ENCODE measurements at regions of chr2 and their contacts with region 1.

Region 1: GRCh38 chr2:172972005-172972619 is 103.5 kb upstream of the MAP3K20 start:
- H3K4me3 ChIP-seq: no peak overlapping the region
- H3K27ac ChIP-seq: no peak overlapping the region
- H3K4me1 ChIP-seq: no peaks in the 10 kb centered on the region
- CTCF ChIP-seq: 0 out of 2 replicates have a peak, but pooled peaks have one; percentile 33

Region 2: DNA sequence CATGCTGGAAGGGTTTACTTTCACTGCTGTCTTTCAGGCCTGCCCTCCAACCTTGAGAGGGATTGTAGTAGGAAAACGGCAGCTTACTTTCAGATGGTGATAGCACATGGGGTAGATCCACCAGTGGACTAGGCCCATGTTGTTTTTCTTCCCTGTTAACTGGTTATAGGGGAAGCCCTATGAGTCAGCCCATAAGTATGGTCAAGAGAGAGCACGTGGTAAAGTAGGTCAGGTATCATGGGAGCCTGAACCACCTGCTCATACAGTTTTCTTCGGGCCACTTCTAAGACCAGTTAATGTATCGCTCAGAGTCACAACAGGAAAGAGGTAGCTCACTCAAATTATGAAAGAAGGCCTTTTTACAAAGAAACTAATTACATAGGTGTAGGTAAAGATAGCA is 383.2 kb before region 1 on chr2:
- CTCF ChIA-PET with region 1: no interaction called
- POLR2A ChIA-PET with region 1: no interaction called
- H3K4me3 ChIP-seq: no peak overlapping the region
- H3K27ac ChIP-seq: no peak overlapping the region
- H3K4me1 ChIP-seq: no peaks in the 10 kb centered on the region
- CTCF ChIP-seq: no peak

Region 3: DNA sequence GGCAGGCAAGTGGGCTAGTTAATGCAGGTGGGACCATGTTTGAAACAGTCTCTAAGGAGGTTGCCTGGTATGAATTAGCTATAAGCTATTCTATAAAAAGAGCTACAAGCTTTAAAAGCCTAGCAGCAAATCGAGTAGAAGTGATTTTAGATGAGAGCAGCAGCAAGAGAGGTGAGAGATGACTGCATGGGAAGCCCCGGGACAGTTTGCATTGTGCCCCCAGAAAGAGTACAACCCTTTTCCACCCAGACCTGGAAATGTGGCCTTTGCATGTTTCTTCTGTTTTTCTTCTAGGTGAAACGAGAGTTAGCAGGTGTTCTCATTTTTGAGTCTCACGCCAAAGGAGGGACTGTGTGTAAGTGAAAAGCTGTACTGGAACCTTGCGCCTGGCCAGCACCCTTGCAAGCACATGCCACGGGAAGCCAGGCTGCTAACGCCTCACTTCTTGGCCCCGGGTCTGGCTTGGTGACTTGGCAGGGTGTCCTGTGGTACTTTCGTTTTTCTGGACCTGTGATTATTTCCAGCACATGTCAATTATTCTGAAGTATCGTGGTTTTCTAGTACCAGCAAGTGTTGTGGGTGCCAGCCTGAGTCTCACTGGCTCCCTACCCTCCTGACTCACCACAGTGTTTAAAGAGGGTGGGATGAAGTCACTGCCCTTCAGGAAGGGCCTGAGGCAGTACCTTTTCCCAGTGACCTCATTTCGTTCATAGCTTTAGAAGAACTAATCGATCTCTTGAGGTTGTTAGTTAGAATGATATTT is 13.2 kb after region 1 on chr2:
- CTCF ChIA-PET with region 1: interaction called, 12 read pairs
- POLR2A ChIA-PET with region 1: no interaction called
- H3K4me3 ChIP-seq: no peak overlapping the region
- H3K27ac ChIP-seq: no peak overlapping the region
- H3K4me1 ChIP-seq: no peaks in the 10 kb centered on the region; the same call in 1 of the 2 replicates
- CTCF ChIP-seq: no peak